Activated T-helper 2 cell treated with anti-CD3 and anti-CD28 coated beads, Interferon-gamma antibody, Interleukin-2, Interleukin-4, amounts not matched to agents 10 μg/mL and 5 μg/mL and 100 μg/mL, durations not matched to agents 14 hours and 24 hours and 36 hours (primary cell): ENCODE measurements at regions of chr6 and their contacts with region 1.

Region 1: GRCh38 chr6:16514249-16514648 is 247.0 kb downstream of the ATXN1 start:
- DNase-seq: peak; percentile 26
- H3K4me3 Mint-ChIP-seq: peak overlapping the region; percentile 49
- H3K27ac Mint-ChIP-seq: peak overlapping the region; percentile 75
- H3K4me1 Mint-ChIP-seq: peaks cover 76% of the 10 kb centered on the region
- H3K27me3 Mint-ChIP-seq: no peaks in the 10 kb centered on the region

Region 2: DNA sequence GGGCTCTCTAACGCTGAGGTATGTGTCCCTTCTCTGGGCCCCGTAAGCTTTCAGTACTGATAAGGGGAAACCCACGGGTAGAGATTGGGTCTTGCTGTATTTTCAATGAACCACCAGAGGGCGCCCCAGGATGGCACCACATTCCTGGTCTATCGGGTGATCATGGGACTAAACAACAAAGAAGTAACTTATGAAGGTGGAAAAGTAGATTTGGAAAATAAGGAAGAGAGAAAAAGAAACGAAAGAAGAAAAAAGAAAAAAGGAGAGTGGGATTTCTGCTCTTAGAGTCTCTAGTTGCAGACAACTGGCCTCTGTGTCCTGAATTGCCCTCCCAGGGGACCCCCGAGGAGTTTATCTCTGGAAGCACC is 182.1 kb before region 1 on chr6:
- intact Hi-C with region 1: loop called (anchors 2 kb)
- DNase-seq: peak; percentile 71
- H3K4me3 Mint-ChIP-seq: no peak overlapping the region
- H3K27ac Mint-ChIP-seq: no peak overlapping the region
- H3K4me1 Mint-ChIP-seq: peaks cover 11% of the 10 kb centered on the region
- H3K27me3 Mint-ChIP-seq: no peaks in the 10 kb centered on the region

Region 3: DNA sequence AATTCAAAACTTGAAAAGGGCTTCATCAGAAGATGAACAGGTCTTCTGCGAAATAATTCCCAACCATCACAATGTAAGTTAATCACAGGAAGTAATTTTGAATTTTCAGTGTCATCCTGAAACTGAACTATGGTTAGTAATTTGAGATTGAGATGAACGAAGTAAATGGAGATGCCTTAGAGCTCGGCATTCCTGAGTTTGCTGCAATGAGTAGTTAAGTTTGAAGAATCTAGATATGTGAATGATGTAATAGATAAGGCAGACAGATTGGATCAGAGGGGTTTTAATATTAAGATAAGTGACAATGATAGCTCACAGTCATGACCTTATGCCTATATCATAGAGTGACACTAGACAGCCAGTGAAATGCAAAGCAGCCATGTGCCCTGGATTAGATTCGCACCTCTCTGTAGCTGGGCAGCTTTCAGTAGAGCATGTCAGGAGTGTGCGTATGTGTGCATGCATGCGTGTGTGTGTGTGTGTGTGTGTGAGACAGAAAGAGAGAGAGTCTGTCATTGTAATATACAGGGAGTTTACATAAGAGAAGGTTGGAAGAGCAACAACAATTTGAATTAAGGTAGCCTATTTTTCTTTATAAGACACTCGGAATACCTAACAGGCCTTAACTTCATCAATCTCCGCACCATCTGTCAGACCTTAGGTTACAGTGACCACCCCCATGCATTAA is 42.9 kb before region 1 on chr6:
- intact Hi-C with region 1: loop called (anchors 5 kb)
- DNase-seq: no peak
- H3K4me3 Mint-ChIP-seq: peak overlapping the region; percentile 35
- H3K27ac Mint-ChIP-seq: peak overlapping the region; percentile 87
- H3K4me1 Mint-ChIP-seq: peaks cover 68% of the 10 kb centered on the region
- H3K27me3 Mint-ChIP-seq: no peaks in the 10 kb centered on the region

Region 4: DNA sequence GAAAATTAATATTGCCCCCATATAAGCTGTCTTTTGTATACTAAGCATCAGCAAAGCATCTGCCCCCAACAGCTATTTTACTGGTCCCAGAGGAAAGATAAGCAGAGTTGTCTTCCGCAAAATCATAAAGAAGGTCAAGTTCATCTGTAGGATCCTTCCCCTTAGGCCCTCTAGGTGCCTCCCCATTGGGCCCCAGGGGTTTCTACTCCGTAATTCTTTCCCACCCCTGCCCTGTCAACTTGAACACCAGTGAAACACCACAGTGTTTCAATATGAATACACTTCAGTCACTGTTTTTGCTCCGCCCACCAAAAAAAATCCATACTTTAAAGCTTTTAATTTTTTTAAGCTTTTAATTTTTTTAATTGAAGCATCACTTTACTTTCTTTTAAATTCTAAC is 87.8 kb after region 1 on chr6:
- intact Hi-C with region 1: loop called (anchors 5 kb)
- DNase-seq: peak; percentile 13
- H3K4me3 Mint-ChIP-seq: no peak overlapping the region
- H3K27ac Mint-ChIP-seq: peak overlapping the region; percentile 74
- H3K4me1 Mint-ChIP-seq: peaks cover 37% of the 10 kb centered on the region
- H3K27me3 Mint-ChIP-seq: no peaks in the 10 kb centered on the region

Region 5: GRCh38 chr6:16956361-16956760 is 442.1 kb after region 1 on chr6:
- intact Hi-C with region 1: loop called (anchors 10 kb)
- DNase-seq: no peak
- H3K4me3 Mint-ChIP-seq: no peak overlapping the region
- H3K27ac Mint-ChIP-seq: peak overlapping the region; percentile 81
- H3K4me1 Mint-ChIP-seq: peaks cover 43% of the 10 kb centered on the region
- H3K27me3 Mint-ChIP-seq: peaks cover 37% of the 10 kb centered on the region